ENCODE measurements at regions of chr2 and their contacts with region 1.

Region 1: GRCh38 chr2:69914170-69914960 is 544 bp upstream of the MXD1 start:
- DNase-seq: peak in 7 of 9 donors; percentile 97 to 100 (median 100)
- ATAC-seq: peak; percentile 94
- H3K4me3 ChIP-seq: peak overlapping the region; percentile 98
- H3K4me3 Mint-ChIP-seq: peak overlapping the region; percentile 70 to 92 (median 82)
- H3K27ac ChIP-seq: peak overlapping the region; percentile 91
- H3K27ac Mint-ChIP-seq: peak overlapping the region; percentile 60 to 96 (median 89)
- H3K4me1 ChIP-seq: peaks cover 4 to 8% of the 10 kb centered on the region in 2 donors
- H3K4me1 Mint-ChIP-seq: peaks cover 8 to 39% (median 34%) of the 10 kb centered on the region in 7 donors
- H3K27me3 ChIP-seq: no peaks in the 10 kb centered on the region
- H3K27me3 Mint-ChIP-seq: no peaks in the 10 kb centered on the region

Region 2: GRCh38 chr2:69946351-69947077 is 32.1 kb after region 1 on chr2:
- CTCF ChIA-PET with region 1: interaction called, 4 read pairs
- POLR2A ChIA-PET with region 1: interaction called, 15 read pairs
- intact Hi-C with region 1: loop called in 1 of 2 experiments (anchors 1 kb)
- DNase-seq: peak in 8 of 9 donors; percentile 24 to 64 (median 56)
- ATAC-seq: peak; percentile 84
- H3K4me3 ChIP-seq: no peak overlapping the region
- H3K4me3 Mint-ChIP-seq: peak overlapping the region in 9 of 10 donors; percentile 11 to 70 (median 31)
- H3K27ac ChIP-seq: no peak overlapping the region
- H3K27ac Mint-ChIP-seq: peak overlapping the region; percentile 4 to 94 (median 69)
- H3K4me1 ChIP-seq: peaks cover 16 to 17% of the 10 kb centered on the region in 2 donors
- H3K4me1 Mint-ChIP-seq: peaks cover 25 to 47% (median 33%) of the 10 kb centered on the region in 7 donors
- H3K27me3 ChIP-seq: no peaks in the 10 kb centered on the region
- H3K27me3 Mint-ChIP-seq: peaks cover 0 to 2% (median 0%) of the 10 kb centered on the region in 5 donors

Region 3: DNA sequence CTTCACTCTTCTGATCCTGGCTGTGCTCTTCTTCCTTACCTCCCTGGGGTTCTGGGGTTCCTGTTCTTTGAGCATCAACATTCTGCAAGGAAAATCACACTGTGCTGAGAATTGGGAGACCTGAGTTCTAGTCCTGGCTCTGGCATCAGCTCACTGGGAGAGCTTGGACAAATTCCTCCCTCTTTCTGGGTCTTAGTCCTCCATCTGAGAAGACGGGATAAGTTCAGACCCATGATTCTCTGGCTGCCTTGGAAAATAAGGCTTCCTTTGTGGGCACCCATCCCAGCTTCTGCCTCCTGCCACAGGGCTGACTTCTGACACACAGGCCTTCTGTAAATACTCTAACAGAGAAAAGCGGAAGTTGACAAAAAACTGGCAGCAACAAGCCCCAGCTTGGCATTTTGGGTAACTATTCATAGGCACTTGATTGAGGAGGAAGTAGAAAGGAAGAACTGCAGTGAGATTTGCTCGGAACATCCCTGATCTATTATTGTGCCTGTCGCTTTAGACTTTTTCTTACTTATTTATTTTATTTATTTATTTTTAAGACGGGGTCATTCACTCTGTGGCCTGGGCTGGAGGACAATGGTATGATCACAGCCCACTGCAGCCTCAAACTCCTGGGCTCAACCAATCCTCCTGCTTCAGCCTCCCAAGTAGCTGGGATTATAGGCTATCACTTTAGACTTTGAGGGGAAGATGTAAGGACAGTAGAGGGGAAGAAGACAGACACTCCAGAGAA is 180.8 kb after region 1 on chr2:
- CTCF ChIA-PET with region 1: interaction called, 4 read pairs
- POLR2A ChIA-PET with region 1: interaction called, 172 read pairs
- intact Hi-C with region 1: no loop called
- DNase-seq: peak in 7 of 9 donors; percentile 65 to 85 (median 78)
- ATAC-seq: peak; percentile 93
- H3K4me3 ChIP-seq: peak overlapping the region; percentile 56
- H3K4me3 Mint-ChIP-seq: peak overlapping the region; percentile 76 to 90 (median 85)
- H3K27ac ChIP-seq: peak overlapping the region; percentile 91
- H3K27ac Mint-ChIP-seq: peak overlapping the region; percentile 91 to 100 (median 97)
- H3K4me1 ChIP-seq: peaks cover 39% of the 10 kb centered on the region in 2 donors
- H3K4me1 Mint-ChIP-seq: peaks cover 42 to 58% (median 48%) of the 10 kb centered on the region in 7 donors
- H3K27me3 ChIP-seq: no peaks in the 10 kb centered on the region
- H3K27me3 Mint-ChIP-seq: no peaks in the 10 kb centered on the region

Region 4: DNA sequence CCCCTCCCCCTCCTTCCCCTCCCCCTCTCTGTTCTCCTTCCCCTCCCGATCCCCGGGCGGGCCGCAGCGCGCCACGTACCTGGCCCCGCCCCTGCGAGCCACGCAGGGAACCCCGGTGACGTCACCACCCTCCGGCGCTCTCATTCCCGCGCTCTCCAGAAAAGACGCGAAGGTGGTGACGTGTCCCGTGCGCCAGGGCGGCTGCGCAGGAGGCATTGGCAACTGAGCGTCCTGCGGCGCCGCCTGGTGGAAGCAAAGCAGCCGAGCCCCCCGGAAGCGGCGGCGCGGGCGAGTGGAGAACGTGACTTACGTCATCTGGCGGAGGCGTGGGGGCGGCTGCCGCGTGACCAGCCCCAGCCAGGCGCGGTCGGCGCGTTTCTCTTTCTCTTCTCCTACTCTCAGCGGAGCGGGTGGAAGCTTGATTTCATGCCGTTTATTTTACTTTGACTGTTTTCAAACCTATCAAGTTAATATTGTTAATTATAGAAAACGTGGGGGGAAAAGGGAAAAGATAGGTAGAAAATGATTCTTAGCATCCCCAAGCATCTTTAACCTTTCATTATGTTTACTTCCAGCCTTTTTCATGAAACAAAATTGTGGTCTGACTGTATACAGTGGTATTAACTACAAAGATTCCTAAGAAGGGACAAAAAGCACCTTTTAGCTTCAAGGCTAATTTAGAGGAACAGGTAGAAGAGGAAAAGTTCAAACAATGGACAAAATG is 228.4 kb after region 1 on chr2:
- CTCF ChIA-PET with region 1: interaction called, 39 read pairs
- POLR2A ChIA-PET with region 1: interaction called, 140 read pairs
- intact Hi-C with region 1: loop called (anchors 1 kb)
- DNase-seq: peak; percentile 99 to 100 (median 100)
- ATAC-seq: peak; percentile 85
- H3K4me3 ChIP-seq: peak overlapping the region; percentile 81
- H3K4me3 Mint-ChIP-seq: peak overlapping the region; percentile 83 to 96 (median 91)
- H3K27ac ChIP-seq: peak overlapping the region; percentile 97
- H3K27ac Mint-ChIP-seq: peak overlapping the region; percentile 97 to 99 (median 97)
- H3K4me1 ChIP-seq: peaks cover 27 to 39% of the 10 kb centered on the region in 2 donors
- H3K4me1 Mint-ChIP-seq: peaks cover 37 to 69% (median 55%) of the 10 kb centered on the region in 7 donors
- H3K27me3 ChIP-seq: no peaks in the 10 kb centered on the region
- H3K27me3 Mint-ChIP-seq: peaks cover 0 to 2% (median 0%) of the 10 kb centered on the region in 5 donors

Region 5: DNA sequence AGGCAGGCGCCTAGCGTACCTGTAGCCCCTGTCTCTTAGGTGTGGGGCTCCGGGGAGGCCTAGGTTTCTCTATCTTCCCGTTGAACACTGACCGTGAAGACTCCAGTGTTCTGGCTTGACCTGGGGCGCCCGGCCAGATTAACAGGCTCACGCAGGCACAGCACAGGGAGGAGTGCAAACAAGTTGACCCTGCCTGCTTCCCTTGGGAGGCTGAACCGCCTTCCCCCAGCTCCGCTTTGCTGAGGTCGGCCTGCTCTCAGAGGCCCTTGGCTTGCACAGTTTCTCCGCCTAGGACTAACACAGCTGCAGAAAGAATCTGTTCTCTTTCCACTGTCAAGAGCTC is 344.1 kb after region 1 on chr2:
- CTCF ChIA-PET with region 1: interaction called, 8 read pairs
- POLR2A ChIA-PET with region 1: interaction called, 26 read pairs
- intact Hi-C with region 1: no loop called
- DNase-seq: peak in 2 of 9 donors; percentile 7 to 16
- ATAC-seq: no peak
- H3K4me3 ChIP-seq: peak overlapping the region; percentile 56
- H3K4me3 Mint-ChIP-seq: peak overlapping the region; percentile 88 to 96 (median 92)
- H3K27ac ChIP-seq: peak overlapping the region; percentile 71
- H3K27ac Mint-ChIP-seq: peak overlapping the region; percentile 58 to 93 (median 86)
- H3K4me1 ChIP-seq: peaks cover 7 to 21% of the 10 kb centered on the region in 2 donors
- H3K4me1 Mint-ChIP-seq: peaks cover 19 to 50% (median 46%) of the 10 kb centered on the region in 7 donors
- H3K27me3 ChIP-seq: no peaks in the 10 kb centered on the region
- H3K27me3 Mint-ChIP-seq: no peaks in the 10 kb centered on the region

Region 6: GRCh38 chr2:70647873-70648481 is 733.6 kb after region 1 on chr2:
- CTCF ChIA-PET with region 1: no interaction called
- POLR2A ChIA-PET with region 1: interaction called, 3 read pairs
- intact Hi-C with region 1: loop called in 1 of 2 experiments (anchors 2 kb)
- DNase-seq: peak; percentile 55 to 81 (median 75)
- ATAC-seq: peak; percentile 85
- H3K4me3 ChIP-seq: no peak overlapping the region
- H3K4me3 Mint-ChIP-seq: no peak overlapping the region
- H3K27ac ChIP-seq: no peak overlapping the region
- H3K27ac Mint-ChIP-seq: peak overlapping the region in 1 of 9 donors; percentile 13
- H3K4me1 ChIP-seq: no peaks in the 10 kb centered on the region
- H3K4me1 Mint-ChIP-seq: no peaks in the 10 kb centered on the region
- H3K27me3 ChIP-seq: no peaks in the 10 kb centered on the region
- H3K27me3 Mint-ChIP-seq: peaks cover 0 to 30% (median 4%) of the 10 kb centered on the region in 5 donors

Measured in naive thymus-derived CD4-positive, alpha-beta T cell (primary cell).